Spleen (tissue), 13 donors: ENCODE measurements at regions of chrX and their contacts with region 1.

Region 1: GRCh38 chrX:24014388-24015018 is 12.5 kb downstream of the KLHL15 start:
- DNase-seq: no peak
- H3K4me3 ChIP-seq: no peak overlapping the region
- H3K27ac ChIP-seq: no peak overlapping the region
- H3K4me1 ChIP-seq: peaks cover 0 to 13% (median 3%) of the 10 kb centered on the region in 6 donors
- H3K27me3 ChIP-seq: peaks cover 0 to 4% (median 0%) of the 10 kb centered on the region in 7 donors
- CTCF ChIP-seq: no peak
- POLR2A ChIP-seq: no peak

Region 2: DNA sequence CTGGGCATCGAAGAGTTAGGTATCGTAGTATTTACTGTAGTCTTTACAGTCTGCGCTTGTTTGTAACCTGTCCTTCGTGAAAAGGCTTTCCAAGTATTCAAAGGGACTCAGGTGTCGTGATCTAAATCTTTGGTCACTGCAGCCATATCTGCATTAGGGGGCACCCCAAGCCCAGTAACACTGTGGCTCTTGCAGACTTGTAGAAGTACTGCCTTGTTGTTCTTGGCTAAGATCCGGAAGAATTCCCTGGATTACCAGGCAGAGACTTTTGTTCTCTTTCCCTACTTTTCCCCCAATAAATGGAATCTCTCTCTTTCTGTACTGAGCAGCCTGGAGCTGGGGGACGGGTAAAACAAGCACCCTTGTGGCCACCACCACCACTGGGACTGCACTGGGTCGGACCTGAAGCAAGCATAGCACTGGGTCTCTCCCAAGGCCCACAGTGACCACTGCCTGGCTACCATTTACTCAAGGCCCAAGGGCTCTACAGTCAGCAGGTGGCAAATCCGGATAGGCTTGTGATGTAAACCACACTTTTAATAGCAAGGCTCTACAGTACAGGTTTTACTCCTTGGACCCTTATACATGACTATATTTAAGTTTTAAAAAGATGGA is 94.7 kb before region 1 on chrX:
- intact Hi-C with region 1: loop called (anchors 10 kb)
- DNase-seq: no peak
- H3K4me3 ChIP-seq: no peak overlapping the region
- H3K27ac ChIP-seq: no peak overlapping the region
- H3K4me1 ChIP-seq: no peaks in the 10 kb centered on the region
- H3K27me3 ChIP-seq: peaks cover 0 to 3% (median 0%) of the 10 kb centered on the region in 7 donors
- CTCF ChIP-seq: no peak
- POLR2A ChIP-seq: no peak

Region 3: DNA sequence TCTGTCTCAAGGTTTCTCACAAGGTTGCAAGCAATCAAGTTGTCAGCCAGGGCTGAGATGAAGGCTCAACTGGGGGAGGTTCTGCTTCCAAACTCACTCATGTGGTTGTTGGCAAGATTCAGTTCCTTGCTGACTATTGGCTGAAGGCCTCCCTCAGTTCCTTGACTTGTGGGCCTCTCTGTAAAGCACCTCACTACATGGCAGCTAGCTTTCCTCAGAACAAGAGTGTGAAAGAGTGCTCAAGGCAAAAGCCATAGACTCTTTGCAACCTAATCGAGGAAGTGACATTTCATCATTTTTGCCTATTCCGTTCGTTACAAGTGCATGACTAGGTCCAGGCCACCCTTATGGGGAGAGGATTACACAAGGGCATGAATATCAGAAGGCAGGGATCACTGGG is 54.7 kb before region 1 on chrX:
- intact Hi-C with region 1: no loop called
- DNase-seq: no peak
- H3K4me3 ChIP-seq: no peak overlapping the region
- H3K27ac ChIP-seq: peak overlapping the region in 1 of 8 donors; percentile 49
- H3K4me1 ChIP-seq: no peaks in the 10 kb centered on the region
- H3K27me3 ChIP-seq: no peaks in the 10 kb centered on the region
- CTCF ChIP-seq: no peak
- POLR2A ChIP-seq: no peak

Region 4: GRCh38 chrX:24184018-24184417 is 169.5 kb after region 1 on chrX:
- intact Hi-C with region 1: no loop called
- DNase-seq: no peak
- H3K4me3 ChIP-seq: no peak overlapping the region
- H3K27ac ChIP-seq: no peak overlapping the region
- H3K4me1 ChIP-seq: peaks cover 0 to 45% (median 0%) of the 10 kb centered on the region in 6 donors
- H3K27me3 ChIP-seq: no peaks in the 10 kb centered on the region
- CTCF ChIP-seq: no peak
- POLR2A ChIP-seq: no peak

Region 5: DNA sequence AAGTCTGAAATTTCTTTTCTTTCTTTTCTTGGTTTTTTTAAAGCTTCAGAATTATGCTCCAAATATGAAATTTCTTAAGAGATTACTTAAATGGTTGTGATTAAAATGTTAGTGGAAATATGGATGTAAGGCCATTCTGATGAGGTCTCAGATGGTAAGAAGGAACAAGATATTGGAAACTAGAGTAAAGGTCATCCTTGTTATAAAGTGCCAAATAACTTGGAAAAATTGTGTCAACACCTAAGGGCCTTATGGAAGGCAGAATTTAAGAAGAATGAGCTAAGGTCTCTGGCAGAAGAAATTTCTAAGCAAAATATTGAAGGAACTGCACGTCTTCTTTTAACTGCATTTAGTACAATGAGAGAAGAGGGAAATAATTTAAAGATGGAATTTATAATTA is 400.5 kb after region 1 on chrX:
- intact Hi-C with region 1: no loop called
- DNase-seq: no peak
- H3K4me3 ChIP-seq: no peak overlapping the region
- H3K27ac ChIP-seq: no peak overlapping the region
- H3K4me1 ChIP-seq: no peaks in the 10 kb centered on the region
- H3K27me3 ChIP-seq: no peaks in the 10 kb centered on the region
- CTCF ChIP-seq: no peak
- POLR2A ChIP-seq: no peak